ENCODE measurements at regions of chr3 and their contacts with region 1.

Region 1: GRCh38 chr3:166554023-166554422 is 716.8 kb upstream of the BCHE start:
- DNase-seq: peak; percentile 8
- H3K4me3 ChIP-seq: no peak overlapping the region
- H3K27ac ChIP-seq: no peak overlapping the region
- H3K4me1 ChIP-seq: no peaks in the 10 kb centered on the region
- H3K27me3 ChIP-seq: no peaks in the 10 kb centered on the region
- CTCF ChIP-seq: no peak
- POLR2A ChIP-seq: no peak

Region 2: DNA sequence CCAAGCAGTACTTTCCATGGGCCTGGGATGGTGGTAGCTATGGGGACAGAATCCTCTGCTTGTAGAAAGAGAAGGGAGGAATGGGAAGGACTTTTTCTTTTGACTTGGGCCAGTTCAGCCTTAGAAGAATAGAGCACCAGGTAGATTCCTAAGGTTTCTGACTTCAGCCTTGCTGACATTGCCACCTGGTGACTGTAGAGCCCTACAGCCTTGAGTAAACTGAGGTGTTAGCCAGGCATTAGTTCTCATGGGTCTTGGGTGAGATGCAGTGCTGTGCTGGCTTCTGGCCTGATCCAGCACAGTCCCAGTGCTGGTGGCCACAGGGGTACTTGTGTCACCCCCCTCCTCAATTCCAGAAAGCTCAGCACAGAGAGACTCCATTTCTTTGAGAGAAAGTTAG is 655.0 kb after region 1 on chr3:
- intact Hi-C with region 1: loop called (anchors 10 kb)
- DNase-seq: no peak
- H3K4me3 ChIP-seq: no peak overlapping the region
- H3K27ac ChIP-seq: no peak overlapping the region
- H3K4me1 ChIP-seq: no peaks in the 10 kb centered on the region
- H3K27me3 ChIP-seq: no peaks in the 10 kb centered on the region
- CTCF ChIP-seq: no peak
- POLR2A ChIP-seq: no peak

Measured in prostate gland (tissue), 2 donors.